Esophagus muscularis mucosa (tissue), 4 donors: ENCODE measurements at regions of chr9 and their contacts with region 1.

Region 1: GRCh38 chr9:33816327-33817252 is at the start of gene UBE2R2:
- DNase-seq: peak; percentile 97
- H3K4me3 ChIP-seq: peak within 1 kb of the TSS; percentile 79 to 94 (median 92)
- H3K27ac ChIP-seq: peak within 1 kb of the TSS; percentile 96 to 100 (median 98)
- H3K4me1 ChIP-seq: peaks cover 40 to 69% (median 61%) of the 10 kb centered on the region in 4 donors
- H3K27me3 ChIP-seq: no peaks in the 10 kb centered on the region
- CTCF ChIP-seq: no peak
- EP300 ChIP-seq: no peak
- POLR2A ChIP-seq: peak; percentile 51
- total RNA-seq, gene UBE2R2: 27.8 to 45.1 (median 34.4) TPM

Region 2: DNA sequence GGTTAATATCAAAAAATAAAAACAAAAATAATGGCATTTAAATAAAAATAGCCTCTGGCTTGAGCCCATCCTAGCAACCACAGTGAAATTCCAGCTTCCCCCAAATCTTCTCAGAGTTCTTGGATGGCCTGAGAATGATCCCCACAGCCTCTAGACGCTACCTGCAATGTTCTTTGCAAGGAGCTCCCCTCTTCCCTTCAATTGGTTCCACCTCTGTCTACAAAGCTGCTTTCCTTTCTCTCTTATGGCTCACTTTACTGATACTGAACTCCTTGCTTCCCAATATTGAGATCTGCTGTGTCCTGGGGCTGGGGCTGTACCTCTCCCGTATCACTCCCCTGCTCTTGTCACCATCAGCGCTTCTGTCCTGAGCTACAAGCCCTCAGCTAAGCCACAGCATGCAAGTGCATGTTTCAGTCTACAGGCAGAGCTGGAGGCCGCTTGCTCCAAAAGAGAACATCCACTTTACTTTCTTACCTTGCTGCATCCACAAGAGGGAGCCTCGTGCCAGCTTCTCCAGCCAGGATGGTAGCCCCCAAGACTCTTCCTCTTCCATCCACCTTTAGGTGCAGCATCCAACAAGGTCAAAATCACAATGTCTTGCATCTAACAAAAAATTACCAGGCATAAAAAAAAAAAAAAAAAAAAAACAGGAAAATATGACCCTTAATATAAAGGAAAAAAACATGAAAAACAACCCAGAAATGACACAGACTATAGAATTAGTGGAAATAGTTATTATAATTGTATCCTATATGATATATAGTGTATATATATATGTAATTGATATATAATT is 78.6 kb before region 1 on chr9:
- intact Hi-C with region 1: no loop called
- DNase-seq: no peak
- H3K4me3 ChIP-seq: no peak overlapping the region
- H3K27ac ChIP-seq: no peak overlapping the region
- H3K4me1 ChIP-seq: no peaks in the 10 kb centered on the region
- H3K27me3 ChIP-seq: peaks cover 0 to 15% (median 0%) of the 10 kb centered on the region in 4 donors
- CTCF ChIP-seq: peak in 2 of 3 experiments; percentile 18 to 42
- EP300 ChIP-seq: no peak
- POLR2A ChIP-seq: no peak

Region 3: GRCh38 chr9:33852216-33852826 is 35.7 kb after region 1 on chr9:
- intact Hi-C with region 1: loop called (anchors 2 kb)
- DNase-seq: no peak
- H3K4me3 ChIP-seq: no peak overlapping the region
- H3K27ac ChIP-seq: peak overlapping the region in 3 of 4 donors; percentile 16 to 54 (median 22)
- H3K4me1 ChIP-seq: peaks cover 40 to 81% (median 71%) of the 10 kb centered on the region in 4 donors
- H3K27me3 ChIP-seq: no peaks in the 10 kb centered on the region
- CTCF ChIP-seq: peak; percentile 56 to 70 (median 63)
- EP300 ChIP-seq: no peak
- POLR2A ChIP-seq: no peak

Region 4: GRCh38 chr9:33919276-33919897 is 102.8 kb after region 1 on chr9:
- intact Hi-C with region 1: loop called (anchors 10 kb)
- DNase-seq: no peak
- H3K4me3 ChIP-seq: no peak overlapping the region
- H3K27ac ChIP-seq: no peak overlapping the region
- H3K4me1 ChIP-seq: peaks cover 0 to 4% (median 0%) of the 10 kb centered on the region in 4 donors
- H3K27me3 ChIP-seq: no peaks in the 10 kb centered on the region
- CTCF ChIP-seq: no peak
- EP300 ChIP-seq: no peak
- POLR2A ChIP-seq: no peak